HEK293T (cell line): ENCODE measurements at regions of chr11 and their contacts with region 1.

Region 1: DNA sequence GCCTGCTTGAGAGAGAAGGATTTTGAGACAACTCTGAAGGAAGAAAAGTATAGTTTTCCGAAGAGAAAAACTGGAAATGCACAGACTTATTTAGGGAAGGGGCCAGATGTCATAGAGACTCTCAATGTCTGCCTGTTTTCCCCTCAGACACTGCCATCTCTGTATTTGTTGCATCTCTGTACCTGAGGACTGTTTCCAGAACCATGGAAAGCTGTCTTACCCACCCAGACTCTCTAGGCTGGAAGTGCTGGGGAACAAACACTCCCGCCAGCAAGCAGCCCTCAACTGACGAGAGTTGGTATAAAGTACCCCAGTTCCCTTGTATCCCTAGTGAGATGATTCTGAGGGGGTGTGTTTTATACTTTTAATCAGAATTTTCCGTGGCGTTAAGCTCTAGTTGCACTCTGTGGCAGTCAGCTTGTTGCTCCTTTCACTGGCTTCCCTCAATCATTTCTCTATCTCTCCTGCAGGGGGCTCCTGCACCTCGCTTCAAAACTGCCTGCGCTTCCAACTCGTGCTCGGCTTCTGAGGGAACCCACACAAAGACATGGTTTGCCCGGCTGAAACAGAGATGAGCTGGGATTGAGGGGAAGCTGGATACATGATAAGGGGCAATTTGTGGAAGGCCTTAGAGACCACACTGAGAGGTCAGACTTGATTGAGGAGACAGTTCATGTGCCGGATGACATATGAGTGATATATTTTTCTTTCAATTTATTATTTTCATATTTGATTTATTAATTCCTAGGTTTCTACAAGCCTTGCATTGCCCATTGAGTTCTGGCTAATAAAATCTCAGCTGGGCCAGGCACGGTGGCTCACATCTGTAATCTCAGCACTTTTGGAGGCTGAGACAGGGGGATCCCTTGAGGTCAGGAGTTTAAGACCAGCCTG is 36.9 kb upstream of the CLPB start:
- DNase-seq: peak; percentile 78

Region 2: DNA sequence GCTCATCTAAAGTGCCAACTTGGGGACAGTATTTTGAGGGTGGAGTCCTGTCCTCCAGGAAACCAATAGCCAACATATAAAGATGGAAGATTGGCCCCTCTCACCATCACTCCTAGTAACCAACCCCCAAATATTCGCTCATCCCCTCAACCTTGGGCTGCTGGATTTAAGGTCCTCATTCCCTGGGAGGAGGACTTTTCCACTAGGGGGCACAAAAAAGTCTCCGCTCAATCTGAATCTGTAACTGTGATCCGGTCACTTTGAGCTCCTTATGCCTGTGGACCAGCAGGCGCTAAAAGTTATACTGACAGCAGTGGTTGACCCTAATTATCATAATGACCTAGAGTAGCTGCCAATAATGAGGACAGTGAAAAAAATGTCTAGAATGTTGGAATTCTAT is 16.5 kb before region 1 on chr11:
- CTCF ChIA-PET with region 1: interaction called, 23 read pairs
- POLR2A ChIA-PET with region 1: no interaction called
- DNase-seq: no peak

Region 3: GRCh38 chr11:72483412-72484186 is 12.3 kb after region 1 on chr11:
- CTCF ChIA-PET with region 1: interaction called, 11 read pairs
- POLR2A ChIA-PET with region 1: interaction called, 5 read pairs
- DNase-seq: no peak

Region 4: DNA sequence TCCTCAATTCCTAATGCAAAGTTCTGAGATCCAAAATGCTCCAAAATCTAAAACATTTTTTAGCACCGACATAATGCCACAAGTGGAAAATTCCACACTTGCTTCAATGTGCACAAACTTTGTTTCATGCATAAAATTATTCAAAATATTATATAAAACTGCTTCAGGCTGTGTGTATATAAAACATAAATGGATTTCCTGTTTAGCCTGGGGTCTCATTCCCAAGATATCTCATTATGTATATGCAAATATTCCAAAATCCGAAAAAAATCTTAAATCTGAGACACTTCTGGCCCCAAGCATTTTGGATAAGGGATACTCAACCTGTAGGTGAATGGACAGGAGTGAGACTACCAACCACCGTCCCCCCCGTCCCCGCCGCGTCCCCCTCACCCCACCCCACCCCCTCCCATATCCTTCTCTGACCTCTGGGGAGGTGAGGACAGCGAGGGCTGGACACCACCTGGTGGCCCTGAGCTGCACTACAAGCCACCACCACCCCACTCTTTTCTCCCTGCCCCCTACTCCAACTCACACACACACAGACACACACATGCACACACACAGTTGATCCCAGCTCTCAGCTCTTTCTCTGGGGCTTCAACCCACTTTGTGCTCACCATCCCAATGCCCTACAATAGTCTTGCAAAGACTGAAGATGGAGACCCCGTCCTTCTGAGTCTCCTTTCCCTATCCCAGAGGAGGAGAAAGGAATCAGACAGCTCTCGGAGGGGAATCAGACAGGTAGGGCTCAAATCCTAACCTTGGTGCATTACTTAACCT is 102.0 kb after region 1 on chr11:
- CTCF ChIA-PET with region 1: interaction called, 34 read pairs
- POLR2A ChIA-PET with region 1: no interaction called
- DNase-seq: peak; percentile 82